Activated CD4-positive, alpha-beta memory T cell treated with anti-CD3 and anti-CD28 coated beads, Interleukin-2, amount 10 ng/mL, durations not matched to agents 7 days and 5 days (primary cell): ENCODE measurements at regions of chr5 and their contacts with region 1.

Region 1: DNA sequence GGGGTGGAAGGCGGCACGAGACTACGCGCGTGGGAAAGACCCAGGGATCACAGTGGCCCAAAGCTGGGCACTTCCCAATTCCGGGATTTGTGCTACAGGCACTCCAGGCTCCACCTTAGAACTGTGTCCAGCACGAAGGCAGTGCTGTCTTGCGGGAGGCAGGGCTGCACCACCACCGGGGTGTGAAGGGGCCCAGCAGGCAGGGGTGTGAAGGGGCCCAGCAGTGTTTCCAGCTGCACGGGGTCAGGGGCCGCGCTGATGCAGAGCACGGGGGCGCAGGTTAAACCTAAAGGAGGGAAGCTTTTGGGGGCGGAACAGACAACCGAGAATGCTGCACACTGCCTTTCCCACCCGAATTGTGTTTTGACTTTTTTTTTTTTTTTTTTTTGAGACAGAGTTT is 1.1 kb upstream of the PDCD6 start:
- DNase-seq: no peak
- H3K4me3 Mint-ChIP-seq: peak overlapping the region; percentile 83
- H3K27ac Mint-ChIP-seq: peak overlapping the region; percentile 62
- H3K4me1 Mint-ChIP-seq: peaks cover 42% of the 10 kb centered on the region
- H3K27me3 Mint-ChIP-seq: no peaks in the 10 kb centered on the region

Region 2: DNA sequence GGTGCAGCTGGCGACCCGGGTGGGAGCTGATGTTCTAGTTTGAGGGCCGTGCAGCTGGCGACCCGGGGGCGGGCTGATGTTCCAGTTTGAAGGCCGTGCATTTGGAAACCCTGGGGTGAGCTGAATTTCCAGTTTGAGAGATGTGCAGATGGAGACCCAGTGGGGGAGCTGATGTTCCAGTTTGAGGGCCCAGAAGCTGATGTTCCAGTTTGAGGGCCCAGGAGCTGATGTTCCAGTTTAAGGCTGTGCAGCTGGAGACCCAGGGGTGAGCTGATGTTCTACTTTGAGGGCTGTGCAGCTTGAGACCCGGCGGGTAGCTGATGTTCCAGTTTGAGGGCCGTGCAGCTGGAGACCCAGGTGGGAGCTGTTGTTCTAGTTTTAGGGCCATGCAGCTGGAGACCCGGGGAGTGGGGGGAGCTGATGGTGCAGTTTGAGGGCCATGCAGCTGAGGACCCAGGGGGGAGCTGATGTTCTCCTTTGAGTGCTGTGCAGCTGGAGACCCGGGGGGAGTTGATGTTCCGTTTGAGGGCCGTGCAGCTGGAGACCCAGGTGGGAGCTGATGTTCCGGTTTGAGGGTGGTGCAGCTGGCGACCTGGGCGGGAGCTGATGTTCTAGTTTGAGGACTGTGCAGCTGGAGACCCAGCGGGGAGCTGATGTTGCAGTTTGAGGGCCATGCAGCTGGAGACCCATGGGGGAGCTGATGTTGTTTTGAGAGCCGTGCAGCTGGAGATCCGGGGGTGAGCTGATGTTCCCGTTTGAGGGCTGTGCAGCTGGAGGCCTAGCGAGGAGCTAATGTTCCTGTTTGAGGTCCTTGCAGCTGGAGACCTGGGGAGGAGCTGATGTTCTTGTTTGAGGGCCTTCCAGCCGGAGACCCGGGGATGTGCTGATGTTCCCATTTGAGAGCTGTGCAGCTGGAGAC is 15.6 kb after region 1 on chr5:
- CTCF ChIA-PET with region 1: interaction called, 3 read pairs
- POLR2A ChIA-PET with region 1: interaction called, 14 read pairs
- DNase-seq: no peak
- H3K4me3 Mint-ChIP-seq: no peak overlapping the region
- H3K27ac Mint-ChIP-seq: no peak overlapping the region
- H3K4me1 Mint-ChIP-seq: peaks cover 7% of the 10 kb centered on the region
- H3K27me3 Mint-ChIP-seq: no peaks in the 10 kb centered on the region

Region 3: GRCh38 chr5:305050-305449 is 34.7 kb after region 1 on chr5:
- CTCF ChIA-PET with region 1: no interaction called
- POLR2A ChIA-PET with region 1: no interaction called
- DNase-seq: no peak
- H3K4me3 Mint-ChIP-seq: no peak overlapping the region
- H3K27ac Mint-ChIP-seq: no peak overlapping the region
- H3K4me1 Mint-ChIP-seq: no peaks in the 10 kb centered on the region
- H3K27me3 Mint-ChIP-seq: no peaks in the 10 kb centered on the region